ENCODE measurements at regions of chr6 and their contacts with region 1.

Region 1: DNA sequence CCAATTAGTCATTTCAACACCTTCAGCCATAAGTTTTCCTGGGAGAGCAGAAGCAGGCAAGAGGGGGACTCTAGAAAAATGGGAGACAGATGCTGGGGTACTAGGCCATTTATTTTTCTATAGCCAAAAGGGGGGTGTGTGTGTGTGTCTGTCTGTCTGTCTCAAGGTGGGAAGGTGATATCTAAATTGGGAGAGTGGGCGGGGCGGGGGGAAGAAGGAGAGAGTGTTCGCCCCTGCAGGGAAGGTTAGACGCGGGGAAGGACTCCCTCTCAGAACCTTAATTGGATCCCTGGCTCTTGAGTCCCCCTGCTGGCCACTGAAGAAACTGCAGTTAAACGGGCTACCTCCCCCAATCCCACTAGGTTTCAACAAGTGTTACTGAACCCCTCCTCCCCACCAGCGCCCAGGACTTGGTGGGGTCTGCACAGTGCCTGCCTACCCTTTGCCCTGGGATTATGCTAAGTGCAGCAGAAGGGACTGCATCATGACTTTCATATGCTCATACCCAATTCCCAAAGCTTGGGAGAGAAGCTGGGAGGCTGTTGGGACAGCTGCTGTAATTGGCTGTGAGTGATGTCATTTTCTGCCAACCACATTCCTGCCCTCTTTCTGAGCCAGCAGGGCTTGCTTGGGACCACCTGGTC is 45.8 kb downstream of the FOXP4 start:
- H3K4me3 Mint-ChIP-seq: no peak overlapping the region
- H3K27ac Mint-ChIP-seq: no peak overlapping the region
- H3K4me1 Mint-ChIP-seq: no peaks in the 10 kb centered on the region
- H3K27me3 Mint-ChIP-seq: no peaks in the 10 kb centered on the region

Region 2: DNA sequence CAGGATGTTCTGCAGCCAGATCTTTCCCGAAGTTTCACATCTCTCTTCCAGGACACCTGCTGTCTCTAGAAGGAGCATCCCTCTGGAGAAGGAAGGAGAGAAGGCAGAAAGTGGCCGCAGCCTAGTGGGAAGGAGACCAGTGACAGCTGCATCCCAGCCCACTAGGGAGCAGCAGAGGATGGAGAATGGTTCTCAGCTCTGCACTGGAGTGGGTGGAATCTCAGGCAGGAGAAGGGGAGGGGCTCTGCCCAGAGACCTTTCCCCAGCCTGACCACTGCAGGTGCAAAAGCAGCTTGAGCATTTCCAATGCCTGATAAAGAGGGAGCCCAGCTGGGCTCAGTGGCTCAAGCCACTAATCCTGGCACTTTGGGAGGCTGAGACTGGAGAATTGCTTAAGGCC is 224.3 kb before region 1 on chr6:
- intact Hi-C with region 1: loop called (anchors 1 kb)
- H3K4me3 Mint-ChIP-seq: no peak overlapping the region
- H3K27ac Mint-ChIP-seq: no peak overlapping the region
- H3K4me1 Mint-ChIP-seq: peaks cover 23% of the 10 kb centered on the region
- H3K27me3 Mint-ChIP-seq: peaks cover 83% of the 10 kb centered on the region

Region 3: DNA sequence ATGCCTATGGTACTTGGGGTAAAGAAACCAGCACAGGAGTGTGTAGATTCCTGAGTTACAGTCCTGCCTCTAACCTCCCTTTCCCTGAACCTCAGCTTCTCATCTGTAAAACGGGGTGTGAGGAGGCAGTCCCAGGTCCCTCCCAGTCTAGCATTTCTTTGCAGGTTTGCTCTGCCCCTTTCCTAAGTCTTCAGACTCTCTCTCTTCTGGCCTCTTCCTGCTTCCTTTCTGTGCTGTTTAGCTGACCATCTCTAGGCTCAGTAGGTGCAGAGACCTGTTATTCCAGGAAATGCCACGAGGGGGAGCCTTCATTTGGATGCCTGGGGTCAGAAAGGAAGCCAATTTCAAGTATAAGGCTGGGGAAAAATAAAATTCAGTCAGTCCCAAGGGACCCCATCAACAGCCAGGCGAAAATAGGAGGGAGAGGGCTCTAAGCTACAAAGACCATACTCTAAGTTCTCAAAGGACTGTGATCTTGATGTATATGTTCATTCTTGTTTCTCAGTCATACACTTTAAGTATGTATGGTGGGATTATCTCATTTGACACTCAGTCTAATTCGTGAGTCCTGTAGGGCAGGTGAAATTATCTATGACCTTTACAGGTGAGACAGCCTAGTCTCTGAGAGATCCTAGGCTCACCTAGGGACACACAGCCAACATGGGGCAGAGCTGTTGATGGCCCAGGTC is 167.5 kb before region 1 on chr6:
- intact Hi-C with region 1: loop called (anchors 1 kb)
- H3K4me3 Mint-ChIP-seq: no peak overlapping the region
- H3K27ac Mint-ChIP-seq: no peak overlapping the region
- H3K4me1 Mint-ChIP-seq: peaks cover 10% of the 10 kb centered on the region
- H3K27me3 Mint-ChIP-seq: peaks cover 31% of the 10 kb centered on the region

Region 4: DNA sequence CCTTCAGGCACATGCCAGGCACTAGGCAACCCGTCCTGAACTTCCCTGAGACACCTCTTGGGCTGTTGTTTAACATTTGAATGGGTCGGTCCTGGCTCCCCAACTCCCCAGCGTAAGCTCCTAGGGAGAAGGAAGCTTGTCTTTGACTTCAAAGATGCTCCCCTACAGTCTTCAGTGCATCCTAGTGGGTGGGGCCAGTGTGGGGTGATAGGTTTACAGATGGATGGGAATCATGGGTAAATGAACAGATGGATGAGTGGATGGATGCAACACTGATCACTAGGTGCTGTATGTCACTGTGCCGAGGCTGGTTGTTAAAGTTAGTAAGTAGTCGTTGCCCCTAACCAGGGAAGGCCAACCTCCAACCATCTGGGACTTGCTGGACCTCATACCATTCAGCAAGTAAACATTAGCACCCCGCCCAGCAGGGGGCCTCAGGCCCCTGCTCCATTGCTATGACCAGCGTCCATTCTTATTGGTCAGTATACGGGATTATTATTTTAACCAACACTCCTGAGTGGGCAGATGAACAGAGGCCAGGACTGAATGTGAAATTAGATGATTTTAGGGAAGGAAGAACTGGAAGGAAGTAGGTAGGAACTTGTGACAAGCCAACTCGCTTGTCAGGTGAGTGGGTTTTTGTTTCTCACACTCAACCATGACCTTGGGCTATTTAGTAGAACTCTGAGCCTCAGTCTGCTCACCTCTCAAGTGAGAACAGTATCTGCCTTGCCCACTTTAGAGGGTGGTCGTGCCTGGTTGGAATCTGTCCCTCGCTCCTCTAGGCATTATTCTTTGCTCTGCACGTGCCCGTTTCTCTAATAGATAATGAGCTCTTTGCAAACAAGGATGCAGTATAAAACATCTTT is 128.7 kb before region 1 on chr6:
- intact Hi-C with region 1: loop called (anchors 1 kb)
- H3K4me3 Mint-ChIP-seq: no peak overlapping the region
- H3K27ac Mint-ChIP-seq: no peak overlapping the region
- H3K4me1 Mint-ChIP-seq: peaks cover 15% of the 10 kb centered on the region
- H3K27me3 Mint-ChIP-seq: peaks cover 50% of the 10 kb centered on the region

Region 5: GRCh38 chr6:41644297-41644879 is 52.4 kb after region 1 on chr6:
- intact Hi-C with region 1: no loop called
- H3K4me3 Mint-ChIP-seq: no peak overlapping the region
- H3K27ac Mint-ChIP-seq: no peak overlapping the region
- H3K4me1 Mint-ChIP-seq: peaks cover under 1% of the 10 kb centered on the region
- H3K27me3 Mint-ChIP-seq: peaks cover 41% of the 10 kb centered on the region